OCI-LY7 (cell line): ENCODE measurements at regions of chr1 and their contacts with region 1.

Region 1: GRCh38 chr1:37146071-37146470 is 111.8 kb upstream of the GRIK3 start:
- DNase-seq: peak; percentile 3
- H3K4me3 ChIP-seq: no peak overlapping the region
- H3K27ac ChIP-seq: no peak overlapping the region
- H3K4me1 ChIP-seq: peaks cover 3% of the 10 kb centered on the region
- CTCF ChIP-seq: no peak

Region 2: GRCh38 chr1:36761118-36761517 is 385.0 kb before region 1 on chr1:
- CTCF ChIA-PET with region 1: interaction called, 11 read pairs
- POLR2A ChIA-PET with region 1: no interaction called
- intact Hi-C with region 1: no loop called
- DNase-seq: no peak
- H3K4me3 ChIP-seq: no peak overlapping the region
- H3K27ac ChIP-seq: no peak overlapping the region
- H3K4me1 ChIP-seq: peaks cover 3% of the 10 kb centered on the region
- CTCF ChIP-seq: no peak